Activated T-helper 2 cell treated with anti-CD3 and anti-CD28 coated beads, Interferon-gamma antibody, Interleukin-2, Interleukin-4, amounts not matched to agents 10 μg/mL and 5 μg/mL and 100 μg/mL, durations not matched to agents 14 hours and 24 hours and 36 hours (primary cell): ENCODE measurements at regions of chr13 and their contacts with region 1.

Region 1: GRCh38 chr13:75357576-75358289 is 124.2 kb downstream of the TBC1D4 start:
- DNase-seq: peak; percentile 37
- H3K4me3 Mint-ChIP-seq: no peak overlapping the region
- H3K27ac Mint-ChIP-seq: no peak overlapping the region
- H3K4me1 Mint-ChIP-seq: peaks cover 35% of the 10 kb centered on the region
- H3K27me3 Mint-ChIP-seq: no peaks in the 10 kb centered on the region

Region 2: GRCh38 chr13:75226733-75227435 is 130.8 kb before region 1 on chr13:
- intact Hi-C with region 1: loop called (anchors 5 kb)
- DNase-seq: no peak
- H3K4me3 Mint-ChIP-seq: no peak overlapping the region
- H3K27ac Mint-ChIP-seq: peak overlapping the region; percentile 0
- H3K4me1 Mint-ChIP-seq: peaks cover 27% of the 10 kb centered on the region
- H3K27me3 Mint-ChIP-seq: peaks cover 3% of the 10 kb centered on the region

Region 3: GRCh38 chr13:75326173-75327134 is 31.3 kb before region 1 on chr13:
- intact Hi-C with region 1: no loop called
- DNase-seq: peak; percentile 56
- H3K4me3 Mint-ChIP-seq: peak overlapping the region; percentile 86
- H3K27ac Mint-ChIP-seq: peak overlapping the region; percentile 95
- H3K4me1 Mint-ChIP-seq: peaks cover 54% of the 10 kb centered on the region
- H3K27me3 Mint-ChIP-seq: no peaks in the 10 kb centered on the region

Region 4: DNA sequence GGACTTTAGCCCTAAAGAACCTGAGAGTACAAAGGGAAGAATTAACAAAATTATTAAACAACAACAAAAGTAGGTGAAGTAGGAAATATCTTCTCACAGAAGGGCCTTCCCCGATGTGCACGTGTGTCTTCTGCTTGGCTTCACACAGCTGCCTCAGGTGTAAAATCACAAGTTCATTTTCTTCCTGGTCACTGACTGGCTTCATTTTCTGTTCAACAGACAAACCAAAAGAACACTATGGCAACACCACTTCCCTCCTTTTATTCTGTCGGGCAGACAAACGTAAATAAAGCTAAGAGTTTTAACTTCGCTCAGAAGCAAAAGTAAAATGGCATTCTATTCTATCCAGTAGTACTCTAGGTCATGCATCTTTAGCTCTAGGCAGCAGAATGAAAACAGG is 16.7 kb before region 1 on chr13:
- intact Hi-C with region 1: loop called (anchors 2 kb)
- DNase-seq: no peak
- H3K4me3 Mint-ChIP-seq: no peak overlapping the region
- H3K27ac Mint-ChIP-seq: no peak overlapping the region
- H3K4me1 Mint-ChIP-seq: peaks cover 2% of the 10 kb centered on the region
- H3K27me3 Mint-ChIP-seq: no peaks in the 10 kb centered on the region